ENCODE measurements at regions of chr9 and their contacts with region 1.

Region 1: GRCh38 chr9:120186276-120186675 is 393.7 kb downstream of the CDK5RAP2 start:
- DNase-seq: no peak
- ATAC-seq: no peak
- H3K4me3 ChIP-seq: no peak overlapping the region
- H3K27ac ChIP-seq: no peak overlapping the region
- H3K4me1 ChIP-seq: no peaks in the 10 kb centered on the region
- H3K27me3 ChIP-seq: peaks cover 0 to 15% (median 3%) of the 10 kb centered on the region in 7 donors
- CTCF ChIP-seq: no peak

Region 2: DNA sequence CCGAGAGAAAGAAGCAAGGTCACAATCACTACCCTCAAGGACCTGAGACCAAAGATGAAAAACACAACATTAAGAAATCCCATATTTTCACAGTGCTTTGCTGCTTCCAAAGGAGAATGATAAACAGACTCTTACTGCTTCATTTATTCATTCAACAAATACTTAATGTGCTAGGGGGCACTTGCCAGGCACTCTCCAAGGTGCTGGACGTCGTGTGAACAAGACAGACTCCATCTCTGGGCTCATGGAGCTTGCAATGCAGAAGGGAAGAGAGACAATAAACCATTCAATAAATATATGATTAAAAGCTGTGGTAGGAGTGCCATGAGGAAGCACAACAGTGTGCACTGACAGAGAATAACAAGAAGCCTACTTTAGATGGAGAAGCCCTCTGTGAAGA is 66.0 kb after region 1 on chr9:
- intact Hi-C with region 1: loop called in 1 of 10 experiments (anchors 2 kb)
- DNase-seq: no peak
- ATAC-seq: no peak
- H3K4me3 ChIP-seq: no peak overlapping the region
- H3K27ac ChIP-seq: no peak overlapping the region
- H3K4me1 ChIP-seq: no peaks in the 10 kb centered on the region
- H3K27me3 ChIP-seq: peaks cover 0 to 17% (median 5%) of the 10 kb centered on the region in 7 donors
- CTCF ChIP-seq: no peak

Measured in heart right ventricle (tissue), 16 donors.